SK-N-SH (cell line): ENCODE measurements at regions of chr11 and their contacts with region 1.

Region 1: DNA sequence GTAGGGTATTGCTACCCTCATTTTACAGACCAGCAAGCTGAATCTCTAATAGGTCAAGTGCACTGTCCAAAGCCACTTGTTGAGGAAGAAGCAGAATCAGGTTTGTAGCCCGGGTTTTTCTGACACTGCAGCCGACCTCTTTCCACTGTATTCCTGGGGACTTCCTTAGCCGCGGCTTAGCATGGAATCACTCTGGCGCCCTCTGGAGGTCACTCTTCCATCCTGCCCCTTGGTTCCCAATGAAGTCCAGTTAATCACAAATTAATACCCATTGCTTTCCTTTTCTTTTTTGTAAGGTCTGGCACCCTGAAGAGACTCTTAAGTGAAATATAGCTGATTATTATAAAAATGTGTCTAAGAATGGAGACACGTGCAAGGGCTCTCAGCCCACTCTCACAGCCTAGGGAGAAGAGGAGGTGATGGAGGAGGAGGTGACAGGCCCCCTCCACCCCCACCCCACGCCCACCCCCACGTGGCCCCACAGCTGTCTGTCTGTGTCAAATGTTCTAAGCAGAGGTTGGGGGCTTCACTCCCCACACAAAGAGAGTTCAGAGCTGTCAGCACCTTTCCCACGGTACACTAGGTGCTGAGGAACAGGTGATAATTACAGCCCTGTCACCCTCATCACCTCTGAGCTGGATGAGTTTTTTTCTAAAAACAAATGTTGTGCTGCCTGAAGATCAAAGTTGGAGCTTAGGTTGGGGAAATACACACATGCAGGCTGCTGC is 57.7 kb upstream of the DRD2 start:
- DNase-seq: peak; percentile 80
- H3K4me3 ChIP-seq: peak overlapping the region in 1 of 2 experiments; percentile 37; a peak in 1 of 4 replicates
- H3K27ac ChIP-seq: no peak overlapping the region
- H3K4me1 ChIP-seq: peaks cover 0 to 5% of the 10 kb centered on the region in 2 experiments; a peak in 1 of 4 replicates
- H3K27me3 ChIP-seq: no peaks in the 10 kb centered on the region; the same call in 1 of the 2 replicates
- CTCF ChIP-seq: peak; percentile 92
- EP300 ChIP-seq: no peak
- RAD21 ChIP-seq: peak; percentile 88

Region 2: DNA sequence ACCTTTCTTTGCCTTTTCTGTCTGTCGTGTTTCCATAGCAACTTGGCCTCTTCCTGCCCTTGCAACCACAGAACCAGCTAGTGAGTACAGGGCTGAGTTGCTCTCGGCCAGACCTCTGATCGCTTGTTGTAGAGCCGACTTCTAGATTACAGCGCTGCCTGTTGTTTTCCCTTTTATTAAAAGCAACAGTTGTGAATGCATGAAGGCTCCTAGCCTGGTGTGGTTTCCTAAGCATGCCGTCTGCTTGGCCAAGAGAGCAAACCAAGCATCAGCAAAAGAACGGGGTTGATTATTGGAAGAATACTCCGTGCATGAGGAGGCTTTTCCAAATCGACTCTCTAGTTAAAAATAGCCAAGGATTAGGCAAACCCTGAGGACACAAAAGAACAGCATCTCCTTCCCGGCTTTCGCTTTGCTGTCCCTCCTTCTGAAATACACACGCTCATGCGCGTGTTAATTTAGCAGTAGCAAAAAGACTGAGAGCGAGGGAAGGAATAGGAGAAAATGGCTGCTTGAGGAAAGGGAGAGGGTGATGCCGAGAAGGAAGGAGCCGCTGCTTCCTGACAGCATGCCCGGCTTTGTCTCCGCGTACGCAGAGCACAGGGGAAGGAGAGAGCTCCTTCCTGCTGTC is 290.0 kb before region 1 on chr11:
- CTCF ChIA-PET with region 1: no interaction called
- POLR2A ChIA-PET with region 1: no interaction called
- DNase-seq: no peak
- H3K4me3 ChIP-seq: no peak overlapping the region
- H3K27ac ChIP-seq: no peak overlapping the region
- H3K4me1 ChIP-seq: peaks cover 7 to 19% of the 10 kb centered on the region in 2 experiments; a peak in 3 of 4 replicates
- H3K27me3 ChIP-seq: no peaks in the 10 kb centered on the region
- CTCF ChIP-seq: no peak
- EP300 ChIP-seq: no peak
- RAD21 ChIP-seq: no peak

Region 3: GRCh38 chr11:113345978-113346377 is 186.9 kb before region 1 on chr11:
- CTCF ChIA-PET with region 1: no interaction called
- POLR2A ChIA-PET with region 1: no interaction called
- DNase-seq: no peak
- H3K4me3 ChIP-seq: no peak overlapping the region
- H3K27ac ChIP-seq: no peak overlapping the region
- H3K4me1 ChIP-seq: peaks cover 0 to 12% of the 10 kb centered on the region in 2 experiments; a peak in 2 of 4 replicates
- H3K27me3 ChIP-seq: no peaks in the 10 kb centered on the region
- CTCF ChIP-seq: no peak
- EP300 ChIP-seq: no peak
- RAD21 ChIP-seq: no peak

Region 4: GRCh38 chr11:113477321-113477720 is 55.5 kb before region 1 on chr11:
- CTCF ChIA-PET with region 1: interaction called, 11 read pairs
- POLR2A ChIA-PET with region 1: no interaction called
- DNase-seq: peak; percentile 83
- H3K4me3 ChIP-seq: no peak overlapping the region
- H3K27ac ChIP-seq: no peak overlapping the region; a peak in 1 of 4 replicates
- H3K4me1 ChIP-seq: peaks cover 0 to 28% of the 10 kb centered on the region in 2 experiments; a peak in 1 of 4 replicates
- H3K27me3 ChIP-seq: peaks cover 12% of the 10 kb centered on the region; the same call in 1 of the 2 replicates
- CTCF ChIP-seq: no peak
- EP300 ChIP-seq: no peak; a peak in 1 of 4 replicates
- RAD21 ChIP-seq: peak; percentile 77

Region 5: DNA sequence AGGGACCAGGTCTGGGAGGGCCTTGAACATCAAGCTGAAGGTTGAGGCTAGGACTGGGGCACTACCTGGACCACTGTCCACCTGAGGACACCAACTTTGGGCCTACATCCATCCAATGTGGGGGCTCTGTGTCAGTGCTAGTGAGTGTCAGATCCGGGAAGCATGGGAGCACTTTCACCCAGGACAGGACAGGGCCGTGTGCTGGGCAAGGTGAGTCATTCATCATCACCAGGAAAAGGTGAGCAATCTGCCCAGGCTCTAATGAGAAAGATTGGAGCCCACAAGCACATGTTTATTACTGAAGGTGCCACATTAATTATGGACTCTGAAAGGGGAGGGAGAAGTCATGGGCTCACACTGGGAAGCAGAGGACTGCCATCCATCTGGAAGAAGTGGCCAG is 18.0 kb before region 1 on chr11:
- CTCF ChIA-PET with region 1: interaction called, 45 read pairs
- POLR2A ChIA-PET with region 1: no interaction called
- DNase-seq: no peak
- H3K4me3 ChIP-seq: no peak overlapping the region
- H3K27ac ChIP-seq: no peak overlapping the region
- H3K4me1 ChIP-seq: no peaks in the 10 kb centered on the region
- H3K27me3 ChIP-seq: no peaks in the 10 kb centered on the region
- CTCF ChIP-seq: no peak
- EP300 ChIP-seq: no peak
- RAD21 ChIP-seq: no peak

Region 6: DNA sequence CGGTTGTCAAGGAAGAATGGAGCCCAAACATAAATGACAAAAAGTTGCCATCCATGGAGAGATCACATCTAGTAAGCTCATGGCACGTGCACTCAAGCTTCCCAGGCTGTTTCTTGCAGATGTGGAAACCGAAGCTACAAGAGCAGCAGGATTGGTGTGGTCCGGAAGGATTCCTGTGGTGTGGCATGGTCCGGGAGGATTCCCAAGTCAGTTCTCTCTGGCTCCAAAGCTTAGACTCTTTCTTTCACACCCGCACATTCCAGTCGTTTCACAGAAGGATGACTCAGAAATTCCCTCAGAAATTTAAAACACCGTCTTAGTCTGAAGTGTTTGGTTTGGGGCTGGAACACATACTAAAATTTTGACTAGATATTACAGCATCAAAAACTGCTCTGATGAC is 20.4 kb after region 1 on chr11:
- CTCF ChIA-PET with region 1: interaction called, 26 read pairs
- POLR2A ChIA-PET with region 1: no interaction called
- DNase-seq: no peak
- H3K4me3 ChIP-seq: no peak overlapping the region
- H3K27ac ChIP-seq: no peak overlapping the region; a peak in 2 of 4 replicates
- H3K4me1 ChIP-seq: peaks cover 0 to 35% of the 10 kb centered on the region in 2 experiments; a peak in 3 of 4 replicates
- H3K27me3 ChIP-seq: no peaks in the 10 kb centered on the region
- CTCF ChIP-seq: no peak
- EP300 ChIP-seq: no peak
- RAD21 ChIP-seq: no peak